ENCODE measurements at regions of chr9 and their contacts with region 1.

Region 1: DNA sequence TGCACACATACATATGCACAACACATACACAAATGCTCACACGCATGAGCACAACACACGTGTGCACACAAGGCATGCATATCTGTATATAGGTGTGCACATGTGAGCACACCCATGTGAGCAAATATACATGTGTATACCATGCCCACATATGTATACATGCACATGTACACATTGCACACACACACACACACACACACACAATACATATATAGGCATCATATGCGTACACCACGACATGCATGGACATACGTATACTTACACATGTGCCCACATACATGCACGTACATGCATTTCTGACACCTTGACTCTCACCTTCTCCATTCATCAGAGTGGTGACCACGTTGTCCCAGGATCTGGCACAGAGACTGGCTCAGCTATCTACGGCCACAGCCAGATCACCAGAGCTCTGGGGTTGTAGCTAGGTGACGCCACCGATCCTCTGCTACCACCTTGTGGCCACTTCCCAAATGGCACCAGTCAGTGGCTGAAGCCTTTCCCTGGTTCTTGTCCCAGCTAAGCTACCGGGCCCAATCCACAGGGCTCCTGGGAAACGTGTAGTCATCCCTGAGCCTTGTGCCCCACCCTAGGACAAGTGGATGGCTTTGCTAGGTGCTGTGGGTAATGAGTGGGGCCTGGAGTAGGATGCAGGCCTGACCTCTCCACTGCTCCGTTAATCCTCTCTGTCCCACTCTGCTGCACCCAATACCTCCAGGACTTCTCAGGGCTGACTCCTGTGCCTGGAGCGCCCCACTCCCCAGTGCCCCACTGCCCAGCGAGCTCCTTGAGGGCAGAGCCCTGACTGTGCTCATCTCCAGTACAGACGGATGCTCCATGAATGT is 194.4 kb downstream of the RGS3 start:
- DNase-seq: peak; percentile 61 to 86 (median 81)
- ATAC-seq: peak; percentile 94
- H3K4me3 ChIP-seq: no peak overlapping the region
- H3K4me3 Mint-ChIP-seq: no peak overlapping the region
- H3K27ac ChIP-seq: no peak overlapping the region
- H3K27ac Mint-ChIP-seq: no peak overlapping the region
- H3K4me1 ChIP-seq: no peaks in the 10 kb centered on the region
- H3K4me1 Mint-ChIP-seq: peaks cover 2% of the 10 kb centered on the region
- H3K27me3 ChIP-seq: no peaks in the 10 kb centered on the region
- H3K27me3 Mint-ChIP-seq: peaks cover 11% of the 10 kb centered on the region
- CTCF ChIP-seq: peak; percentile 89

Region 2: GRCh38 chr9:112921549-112921948 is 736.4 kb before region 1 on chr9:
- CTCF ChIA-PET with region 1: no interaction called
- POLR2A ChIA-PET with region 1: no interaction called
- intact Hi-C with region 1: loop called in 1 of 2 experiments (anchors 10 kb)
- DNase-seq: peak in 1 of 9 experiments; percentile 5
- ATAC-seq: no peak
- H3K4me3 ChIP-seq: no peak overlapping the region
- H3K4me3 Mint-ChIP-seq: no peak overlapping the region
- H3K27ac ChIP-seq: no peak overlapping the region
- H3K27ac Mint-ChIP-seq: no peak overlapping the region
- H3K4me1 ChIP-seq: no peaks in the 10 kb centered on the region
- H3K4me1 Mint-ChIP-seq: no peaks in the 10 kb centered on the region
- H3K27me3 ChIP-seq: no peaks in the 10 kb centered on the region
- H3K27me3 Mint-ChIP-seq: peaks cover 9% of the 10 kb centered on the region
- CTCF ChIP-seq: no peak

Region 3: GRCh38 chr9:113401027-113401792 is 256.7 kb before region 1 on chr9 and contains the start of gene ALAD:
- CTCF ChIA-PET with region 1: interaction called, 52 read pairs
- POLR2A ChIA-PET with region 1: no interaction called
- intact Hi-C with region 1: loop called (anchors 1 to 2 kb)
- DNase-seq: peak; percentile 98 to 100 (median 100)
- ATAC-seq: peak; percentile 99
- H3K4me3 ChIP-seq: peak within 1 kb of the TSS; percentile 80 to 81
- H3K4me3 Mint-ChIP-seq: peak within 1 kb of the TSS; percentile 97
- H3K27ac ChIP-seq: peak within 1 kb of the TSS; percentile 53
- H3K27ac Mint-ChIP-seq: peak within 1 kb of the TSS; percentile 92
- H3K4me1 ChIP-seq: peaks cover 16% of the 10 kb centered on the region
- H3K4me1 Mint-ChIP-seq: peaks cover 28% of the 10 kb centered on the region
- H3K27me3 ChIP-seq: no peaks in the 10 kb centered on the region
- H3K27me3 Mint-ChIP-seq: no peaks in the 10 kb centered on the region
- CTCF ChIP-seq: peak; percentile 94
- total RNA-seq, gene ALAD: 11.2 to 11.5 TPM

Region 4: DNA sequence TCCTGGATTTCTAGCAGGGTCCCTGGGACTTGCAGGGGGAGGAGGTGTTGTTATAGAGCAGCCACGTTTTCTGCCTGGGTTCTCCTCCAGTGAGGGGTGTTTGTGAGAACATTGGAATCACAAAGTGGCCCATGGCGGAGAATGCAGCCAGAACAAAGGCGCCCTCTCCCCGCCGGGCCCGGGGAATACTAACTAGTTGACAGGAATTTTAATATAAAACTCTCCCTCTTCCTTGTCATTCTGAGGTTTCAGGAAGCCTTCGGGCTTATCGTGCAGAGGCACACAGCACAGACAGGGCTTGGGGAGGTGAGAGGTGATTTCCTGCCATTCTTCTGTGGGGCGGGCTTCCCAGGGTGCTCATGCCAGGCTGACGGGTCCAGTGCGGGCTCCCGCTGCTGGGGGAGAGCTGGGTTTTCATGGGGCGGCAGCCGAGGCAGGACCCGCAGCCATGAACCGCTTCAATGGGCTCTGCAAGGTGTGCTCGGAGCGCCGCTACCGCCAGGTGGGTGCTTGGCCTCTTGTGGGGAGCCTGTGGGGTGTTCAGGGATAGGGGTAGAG is 156.7 kb before region 1 on chr9:
- CTCF ChIA-PET with region 1: interaction called, 12 read pairs
- POLR2A ChIA-PET with region 1: no interaction called
- intact Hi-C with region 1: no loop called
- DNase-seq: no peak
- ATAC-seq: no peak
- H3K4me3 ChIP-seq: no peak overlapping the region
- H3K4me3 Mint-ChIP-seq: no peak overlapping the region
- H3K27ac ChIP-seq: no peak overlapping the region
- H3K27ac Mint-ChIP-seq: no peak overlapping the region
- H3K4me1 ChIP-seq: peaks cover 16% of the 10 kb centered on the region
- H3K4me1 Mint-ChIP-seq: peaks cover 20% of the 10 kb centered on the region
- H3K27me3 ChIP-seq: no peaks in the 10 kb centered on the region
- H3K27me3 Mint-ChIP-seq: no peaks in the 10 kb centered on the region
- CTCF ChIP-seq: no peak

Region 5: DNA sequence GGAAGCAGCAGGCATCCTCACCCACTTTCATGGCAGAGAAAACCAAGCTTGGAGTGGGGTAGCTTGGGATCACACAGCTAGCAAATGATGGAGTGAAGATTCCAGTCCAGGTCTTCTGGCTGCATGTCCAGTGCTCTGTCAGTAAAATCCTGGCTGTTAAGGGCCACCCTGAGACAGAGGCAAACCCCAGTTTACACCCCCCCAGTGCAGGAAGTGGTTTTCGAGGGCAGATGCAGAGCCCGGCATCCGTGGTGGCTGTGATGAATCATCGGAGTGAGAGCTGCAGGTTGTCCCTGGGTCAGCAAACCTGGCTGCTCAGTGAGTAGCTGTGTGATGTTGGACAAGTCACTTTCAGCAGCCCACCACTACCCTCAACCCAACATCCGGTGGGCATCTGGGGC is 79.0 kb before region 1 on chr9:
- CTCF ChIA-PET with region 1: interaction called, 46 read pairs
- POLR2A ChIA-PET with region 1: no interaction called
- intact Hi-C with region 1: loop called in 1 of 2 experiments (anchors 5 kb)
- DNase-seq: peak; percentile 50 to 92 (median 87)
- ATAC-seq: peak; percentile 56
- H3K4me3 ChIP-seq: peak overlapping the region; percentile 15 to 24
- H3K4me3 Mint-ChIP-seq: peak overlapping the region; percentile 79
- H3K27ac ChIP-seq: peak overlapping the region; percentile 37 to 76
- H3K27ac Mint-ChIP-seq: peak overlapping the region; percentile 94
- H3K4me1 ChIP-seq: peaks cover 57% of the 10 kb centered on the region
- H3K4me1 Mint-ChIP-seq: peaks cover 81% of the 10 kb centered on the region
- H3K27me3 ChIP-seq: no peaks in the 10 kb centered on the region
- H3K27me3 Mint-ChIP-seq: no peaks in the 10 kb centered on the region
- CTCF ChIP-seq: no peak

Region 6: GRCh38 chr9:113624721-113625120 is 33.2 kb before region 1 on chr9:
- CTCF ChIA-PET with region 1: interaction called, 24 read pairs
- POLR2A ChIA-PET with region 1: no interaction called
- intact Hi-C with region 1: no loop called
- DNase-seq: no peak
- ATAC-seq: no peak
- H3K4me3 ChIP-seq: no peak overlapping the region
- H3K4me3 Mint-ChIP-seq: no peak overlapping the region
- H3K27ac ChIP-seq: no peak overlapping the region
- H3K27ac Mint-ChIP-seq: no peak overlapping the region
- H3K4me1 ChIP-seq: no peaks in the 10 kb centered on the region
- H3K4me1 Mint-ChIP-seq: no peaks in the 10 kb centered on the region
- H3K27me3 ChIP-seq: no peaks in the 10 kb centered on the region
- H3K27me3 Mint-ChIP-seq: peaks cover 5% of the 10 kb centered on the region
- CTCF ChIP-seq: no peak

Region 7: GRCh38 chr9:113669522-113670115 is 11.7 kb after region 1 on chr9:
- CTCF ChIA-PET with region 1: interaction called, 27 read pairs
- POLR2A ChIA-PET with region 1: no interaction called
- intact Hi-C with region 1: no loop called
- DNase-seq: no peak
- ATAC-seq: no peak
- H3K4me3 ChIP-seq: no peak overlapping the region
- H3K4me3 Mint-ChIP-seq: no peak overlapping the region
- H3K27ac ChIP-seq: no peak overlapping the region
- H3K27ac Mint-ChIP-seq: no peak overlapping the region
- H3K4me1 ChIP-seq: no peaks in the 10 kb centered on the region
- H3K4me1 Mint-ChIP-seq: no peaks in the 10 kb centered on the region
- H3K27me3 ChIP-seq: no peaks in the 10 kb centered on the region
- H3K27me3 Mint-ChIP-seq: peaks cover 2% of the 10 kb centered on the region
- CTCF ChIP-seq: no peak

Region 8: DNA sequence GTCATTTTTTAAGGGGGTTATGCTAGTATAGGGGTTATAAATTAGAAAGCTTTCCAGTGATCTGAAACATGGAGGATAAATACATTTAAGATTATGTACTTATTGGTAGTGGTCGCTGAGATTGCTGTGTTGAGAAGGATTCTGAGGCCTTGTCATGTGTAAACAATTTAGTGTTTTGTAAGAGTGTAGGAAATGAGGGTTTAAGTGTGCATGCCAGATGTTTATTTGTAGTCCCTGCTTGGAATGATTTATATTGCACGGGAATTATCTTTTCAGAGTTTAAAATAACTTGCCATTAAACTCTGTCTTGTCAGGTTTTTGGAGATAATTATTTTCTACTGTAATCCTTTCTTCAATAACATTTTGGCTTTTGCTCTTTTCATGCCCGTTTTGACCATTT is 237.6 kb after region 1 on chr9:
- CTCF ChIA-PET with region 1: no interaction called
- POLR2A ChIA-PET with region 1: no interaction called
- intact Hi-C with region 1: no loop called
- DNase-seq: no peak
- ATAC-seq: no peak
- H3K4me3 ChIP-seq: no peak overlapping the region
- H3K4me3 Mint-ChIP-seq: no peak overlapping the region
- H3K27ac ChIP-seq: no peak overlapping the region
- H3K27ac Mint-ChIP-seq: no peak overlapping the region
- H3K4me1 ChIP-seq: no peaks in the 10 kb centered on the region
- H3K4me1 Mint-ChIP-seq: no peaks in the 10 kb centered on the region
- H3K27me3 ChIP-seq: no peaks in the 10 kb centered on the region
- H3K27me3 Mint-ChIP-seq: no peaks in the 10 kb centered on the region
- CTCF ChIP-seq: no peak

Region 9: GRCh38 chr9:114611516-114612271 is 953.8 kb after region 1 on chr9:
- CTCF ChIA-PET with region 1: no interaction called
- POLR2A ChIA-PET with region 1: no interaction called
- intact Hi-C with region 1: no loop called
- DNase-seq: peak in 8 of 9 experiments; percentile 21 to 81 (median 45)
- ATAC-seq: peak; percentile 67
- H3K4me3 ChIP-seq: peak overlapping the region; percentile 80 to 90
- H3K4me3 Mint-ChIP-seq: peak overlapping the region; percentile 91
- H3K27ac ChIP-seq: peak overlapping the region; percentile 77 to 80
- H3K27ac Mint-ChIP-seq: peak overlapping the region; percentile 95
- H3K4me1 ChIP-seq: peaks cover 36% of the 10 kb centered on the region
- H3K4me1 Mint-ChIP-seq: peaks cover 47% of the 10 kb centered on the region
- H3K27me3 ChIP-seq: no peaks in the 10 kb centered on the region
- H3K27me3 Mint-ChIP-seq: no peaks in the 10 kb centered on the region
- CTCF ChIP-seq: no peak